ENCODE measurements at regions of chr19 and their contacts with region 1.

Region 1: DNA sequence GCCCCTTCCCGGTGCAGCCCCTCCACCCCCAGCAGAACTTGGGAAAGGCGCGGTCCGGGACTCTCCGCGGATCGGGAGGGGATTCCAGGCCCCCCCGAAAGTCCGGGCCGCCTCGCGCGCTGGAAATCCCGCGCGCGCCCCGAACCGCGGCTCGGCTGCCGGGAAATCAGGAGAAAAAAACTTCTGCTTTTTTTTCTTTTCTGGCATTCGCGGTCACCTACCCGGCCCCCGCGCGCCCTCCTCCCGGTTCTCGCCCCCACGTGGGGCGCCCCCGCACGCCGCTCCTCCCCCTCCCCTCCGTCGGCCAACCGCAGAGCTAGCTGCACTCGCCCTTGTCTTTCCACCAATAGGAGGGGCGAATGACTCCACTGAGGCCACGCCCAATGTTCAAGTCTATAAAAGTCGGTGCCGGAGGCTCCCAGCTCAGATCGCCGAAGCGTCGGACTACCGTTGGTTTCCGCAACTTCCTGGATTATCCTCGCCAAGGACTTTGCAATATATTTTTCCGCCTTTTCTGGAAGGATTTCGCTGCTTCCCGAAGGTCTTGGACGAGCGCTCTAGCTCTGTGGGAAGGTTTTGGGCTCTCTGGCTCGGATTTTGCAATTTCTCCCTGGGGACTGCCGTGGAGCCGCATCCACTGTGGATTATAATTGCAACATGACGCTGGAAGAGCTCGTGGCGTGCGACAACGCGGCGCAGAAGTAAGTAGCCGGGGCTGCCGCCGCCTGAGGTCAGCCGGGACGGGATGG is at the start of gene GADD45B:
- DNase-seq: peak; percentile 98
- ATAC-seq: peak; percentile 81
- total RNA-seq, gene GADD45B: 42.1 TPM

Region 2: GRCh38 chr19:2050991-2051772 is 424.7 kb before region 1 on chr19 and contains the start of gene MKNK2:
- intact Hi-C with region 1: no loop called
- DNase-seq: peak; percentile 96
- ATAC-seq: peak; percentile 77
- total RNA-seq, gene MKNK2: 238 TPM

Region 3: GRCh38 chr19:2355168-2356035 is 120.5 kb before region 1 on chr19:
- intact Hi-C with region 1: no loop called
- DNase-seq: no peak
- ATAC-seq: no peak

Region 4: GRCh38 chr19:2578901-2579677 is 103.2 kb after region 1 on chr19:
- intact Hi-C with region 1: loop called (anchors 2 kb)
- DNase-seq: peak; percentile 95
- ATAC-seq: peak; percentile 83

Region 5: GRCh38 chr19:2610637-2611482 is 135.0 kb after region 1 on chr19:
- intact Hi-C with region 1: loop called (anchors 2 kb)
- DNase-seq: peak; percentile 96
- ATAC-seq: peak; percentile 90